Adrenal gland (tissue), 19 donors: ENCODE measurements at regions of chr19 and their contacts with region 1.

Region 1: DNA sequence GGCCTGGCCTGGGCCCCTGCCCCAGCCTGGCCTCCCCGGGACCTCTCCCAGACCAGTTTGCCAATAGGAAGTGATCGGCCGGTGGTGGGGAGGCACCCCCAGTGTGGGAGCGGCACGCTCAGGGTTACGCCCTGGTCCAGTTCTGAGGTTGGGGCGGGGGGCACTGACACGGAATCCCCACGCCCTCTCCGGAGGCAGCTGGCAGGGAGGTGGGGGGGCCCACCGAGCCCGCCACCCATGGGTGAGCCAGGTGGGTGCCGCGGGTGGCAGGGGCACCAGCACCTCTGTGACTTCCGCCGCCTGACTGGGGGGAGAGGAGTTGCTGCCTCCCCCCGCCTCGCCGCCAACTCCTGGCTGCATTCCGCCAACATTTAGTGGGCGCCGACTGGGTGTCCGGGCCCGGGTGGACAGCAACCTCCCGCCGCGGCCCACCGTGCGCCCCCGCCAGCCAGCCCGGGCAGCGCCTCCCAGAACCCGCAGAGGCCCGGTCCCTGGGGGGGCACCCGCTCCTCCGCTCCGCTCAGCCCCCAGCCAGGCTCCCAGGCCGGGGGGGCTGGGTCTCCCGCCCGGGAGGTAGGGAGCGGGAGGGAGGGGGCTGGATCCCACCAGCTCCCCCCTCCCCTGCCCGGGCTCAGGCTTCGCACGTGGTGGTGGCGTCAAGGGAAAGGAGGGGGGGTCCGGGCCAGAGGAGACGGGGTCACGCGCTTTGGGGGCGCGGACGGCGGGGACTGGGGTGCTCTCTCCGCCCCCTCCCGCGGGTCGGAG is 2.0 kb downstream of the ZBTB7A start:
- DNase-seq: peak in 6 of 7 donors; percentile 63 to 80 (median 68)
- H3K4me3 ChIP-seq: peak overlapping the region; percentile 81 to 99 (median 96)
- H3K27ac ChIP-seq: peak overlapping the region; percentile 69 to 98 (median 90)
- H3K4me1 ChIP-seq: peaks cover 46 to 55% of the 10 kb centered on the region in 2 donors
- H3K27me3 ChIP-seq: no peaks in the 10 kb centered on the region
- CTCF ChIP-seq: no peak
- POLR2A ChIP-seq: no peak

Region 2: DNA sequence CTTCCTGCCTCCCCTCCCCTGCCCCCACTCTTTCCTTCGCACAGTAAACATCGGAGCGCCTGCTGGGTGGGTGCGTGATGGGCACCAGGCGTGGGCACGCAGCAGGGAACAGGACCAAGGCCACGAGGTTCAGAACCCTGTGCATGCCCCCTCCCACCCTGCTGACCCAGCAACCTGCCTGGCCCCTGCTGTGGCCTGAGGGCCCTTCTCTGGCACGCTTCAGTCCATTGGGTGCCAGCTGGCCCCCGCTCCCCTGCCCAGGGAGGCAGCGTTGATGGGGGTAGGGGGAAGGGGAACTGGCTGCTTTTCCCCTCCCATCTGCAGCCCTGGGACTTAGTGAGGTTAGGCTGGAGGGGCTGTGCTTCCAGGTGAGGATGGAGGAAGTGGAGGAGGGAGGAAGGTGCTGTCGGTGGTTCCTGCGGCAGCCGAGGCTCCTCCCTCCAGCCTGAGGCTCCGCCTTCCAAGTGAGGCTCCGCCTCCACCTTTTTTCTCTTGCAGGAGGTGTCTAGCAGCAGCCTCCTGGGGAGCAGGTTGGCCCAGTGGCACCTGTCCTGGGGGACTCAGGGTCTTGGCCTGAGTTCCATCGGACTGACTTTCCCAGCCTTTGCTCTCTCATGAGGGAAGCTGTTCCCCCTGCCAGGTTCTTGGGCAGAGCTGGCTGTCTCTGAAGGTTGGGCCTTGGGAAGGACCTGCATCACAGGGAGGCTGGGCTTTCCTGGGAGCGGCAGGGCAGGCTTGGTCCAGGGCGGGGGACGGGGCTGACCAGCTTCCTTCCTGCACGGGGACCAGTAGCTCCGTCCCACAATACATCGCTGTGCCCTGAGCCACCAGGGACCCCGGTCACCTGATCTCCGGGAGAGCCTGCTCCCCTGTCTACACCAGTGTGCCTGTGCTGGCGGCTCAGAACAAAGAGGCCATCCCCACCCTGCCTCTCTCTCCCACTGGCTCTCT is 49.9 kb before region 1 on chr19:
- intact Hi-C with region 1: loop called in 1 of 2 experiments (anchors 5 kb)
- DNase-seq: peak; percentile 64 to 89 (median 85)
- H3K4me3 ChIP-seq: peak overlapping the region in 1 of 4 donors; percentile 26
- H3K27ac ChIP-seq: peak overlapping the region; percentile 46 to 89 (median 74)
- H3K4me1 ChIP-seq: peaks cover 47 to 59% of the 10 kb centered on the region in 2 donors
- H3K27me3 ChIP-seq: no peaks in the 10 kb centered on the region
- CTCF ChIP-seq: no peak
- POLR2A ChIP-seq: peak in 1 of 2 donors; percentile 36